ENCODE measurements at regions of chr14 and their contacts with region 1.

Region 1: DNA sequence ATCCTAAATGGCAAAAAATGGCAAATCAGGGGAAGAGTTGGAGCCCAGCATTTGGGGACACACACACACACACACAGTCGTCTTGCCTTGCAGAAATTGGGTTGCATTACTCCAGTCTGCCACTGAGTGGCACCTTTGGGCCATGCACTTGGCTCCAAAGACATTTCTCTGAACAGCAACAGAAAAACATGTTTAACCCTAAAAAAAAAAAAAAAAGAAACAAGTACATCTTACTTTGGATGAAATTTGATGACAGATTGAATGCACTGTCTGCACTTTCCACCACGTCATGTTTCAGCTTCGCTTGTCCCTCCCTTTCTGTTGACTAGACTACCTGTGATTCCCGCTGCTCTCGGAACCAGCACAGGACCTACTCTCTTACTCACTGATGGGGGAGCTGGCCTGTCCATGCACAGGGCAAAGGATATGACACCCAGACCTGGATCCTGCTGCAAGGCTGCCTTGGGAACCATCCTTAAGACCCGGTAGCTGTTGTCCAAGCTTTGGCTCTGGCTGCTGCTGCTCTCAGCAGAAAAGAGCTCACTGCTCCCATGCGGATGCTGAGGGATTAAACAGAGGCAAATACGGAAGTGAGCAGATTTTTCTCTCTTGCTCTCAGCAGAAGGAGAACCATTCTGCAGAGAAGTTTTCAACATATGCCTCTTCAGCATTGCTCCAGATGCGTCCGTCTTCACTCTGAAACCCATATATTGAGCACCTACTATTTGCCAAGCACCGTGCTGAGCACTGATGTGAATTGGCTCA is 376.8 kb downstream of the DPF3 start:
- DNase-seq: peak; percentile 65
- ATAC-seq: peak; percentile 87

Region 2: GRCh38 chr14:72178517-72178916 is 338.6 kb before region 1 on chr14:
- intact Hi-C with region 1: no loop called
- DNase-seq: no peak
- ATAC-seq: no peak

Region 3: DNA sequence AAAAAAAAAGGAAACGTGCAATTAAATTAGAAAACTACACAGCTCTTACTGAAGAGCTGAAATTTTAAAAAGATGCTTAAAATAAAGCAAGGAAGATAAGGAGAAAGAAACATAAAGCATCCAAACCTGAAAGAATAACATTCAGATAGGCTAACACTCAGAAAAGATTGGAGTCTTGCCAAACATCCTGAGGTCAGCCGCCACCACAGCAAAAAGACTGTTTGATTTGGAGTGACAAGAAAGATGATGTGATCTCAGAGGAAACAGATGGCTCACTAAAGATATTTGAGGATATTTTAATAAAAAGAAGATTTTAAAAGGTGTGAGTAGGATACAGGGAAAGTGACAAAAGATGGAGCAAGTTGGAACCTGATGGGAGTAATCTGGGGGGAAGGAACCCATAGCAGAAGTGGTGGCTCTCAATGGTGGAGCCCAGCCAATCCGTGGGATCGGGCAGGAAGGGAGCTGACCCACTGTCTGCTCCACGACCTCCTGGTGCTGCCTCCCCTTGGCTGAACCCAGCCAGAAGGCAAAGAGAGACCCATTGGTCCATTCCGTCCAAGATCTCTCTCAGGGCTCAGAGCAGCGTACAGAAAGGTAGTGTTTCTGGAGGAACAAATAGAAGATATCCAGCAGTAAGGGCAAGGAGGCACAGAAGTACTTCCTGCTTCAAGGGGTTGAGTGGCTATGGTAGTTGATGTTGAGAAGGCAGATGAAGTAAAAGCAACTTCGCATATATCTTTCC is 115.3 kb before region 1 on chr14:
- intact Hi-C with region 1: no loop called
- DNase-seq: no peak
- ATAC-seq: no peak

Region 4: DNA sequence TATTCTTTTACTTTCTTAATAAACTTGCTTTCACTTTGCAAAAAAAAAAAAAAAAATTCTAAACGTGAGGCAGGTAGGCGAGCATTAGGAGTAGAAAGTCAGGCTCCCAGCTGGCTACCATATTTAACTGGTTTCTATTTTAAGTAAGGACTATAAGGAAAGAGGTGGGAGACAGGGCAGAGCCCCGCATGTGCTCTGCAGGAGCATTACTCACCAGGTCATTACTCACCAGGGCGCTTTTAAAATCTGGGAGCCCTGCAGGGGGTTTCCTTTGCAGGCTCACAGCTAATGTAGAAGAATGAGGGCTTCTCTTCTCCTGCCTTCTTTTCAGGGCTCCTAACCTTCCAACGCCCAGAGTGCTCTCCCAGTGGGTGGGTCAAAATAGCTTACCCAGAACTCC is 390.8 kb after region 1 on chr14:
- intact Hi-C with region 1: loop called (anchors 2 kb)
- DNase-seq: no peak
- ATAC-seq: no peak

Region 5: GRCh38 chr14:72948481-72949138 is 431.5 kb after region 1 on chr14:
- intact Hi-C with region 1: loop called (anchors 2 kb)
- DNase-seq: peak; percentile 81
- ATAC-seq: peak; percentile 67

Measured in Right ventricle myocardium superior (tissue), 1 donor.